BJ (cell line): ENCODE measurements at regions of chr4 and their contacts with region 1.

Region 1: DNA sequence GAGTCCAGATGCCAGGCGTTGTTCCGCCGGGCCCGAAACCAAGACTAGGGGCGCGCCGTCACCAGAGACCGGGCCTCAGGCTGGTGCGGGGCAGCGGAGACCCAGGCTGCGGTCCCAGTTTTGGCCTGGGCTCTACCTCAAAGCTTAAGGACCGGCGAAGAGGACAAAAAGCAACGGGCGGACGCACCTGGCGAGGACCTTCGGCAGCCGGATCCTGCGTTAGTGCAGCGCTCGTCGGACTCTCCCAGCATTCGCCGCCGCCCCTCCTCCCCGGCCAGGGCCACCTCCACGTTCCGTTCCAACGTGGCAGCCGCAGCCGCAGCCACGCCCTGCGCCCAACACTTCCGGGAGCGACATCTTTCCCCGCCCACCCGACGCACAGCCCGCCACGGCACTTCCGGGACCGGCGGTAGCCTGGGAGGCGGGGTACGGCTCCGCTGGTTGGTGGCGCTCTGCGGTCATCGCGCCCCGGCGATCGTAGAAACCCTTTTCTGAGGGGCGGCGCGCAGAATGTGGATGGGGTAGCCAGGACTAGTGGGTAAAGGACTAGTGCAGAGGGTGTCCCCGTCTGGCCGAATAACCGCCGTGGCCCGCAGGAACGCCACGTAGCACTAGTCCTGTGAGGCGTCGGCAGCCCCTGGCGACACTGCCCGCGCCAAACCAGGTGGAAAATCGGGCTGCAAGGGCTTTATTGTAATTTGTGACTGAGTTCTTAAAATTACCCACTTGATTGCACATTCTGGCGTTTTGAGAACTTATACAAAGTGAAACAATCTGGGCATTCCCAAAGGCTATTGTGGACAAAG is at the start of gene SEC31A:
- DNase-seq: peak; percentile 39
- H3K4me3 ChIP-seq: peak within 1 kb of the TSS; percentile 97
- H3K27me3 ChIP-seq: no peaks in the 10 kb centered on the region
- CTCF ChIP-seq: 0 out of 2 replicates have a peak, but pooled peaks have one; percentile 14
- polyA plus RNA-seq, gene SEC31A: 404 and 451 TPM in 2 replicates

Region 2: GRCh38 chr4:82423245-82424054 is 467.7 kb before region 1 on chr4:
- CTCF ChIA-PET with region 1: no interaction called
- POLR2A ChIA-PET with region 1: interaction called, 14 read pairs
- DNase-seq: no peak
- H3K4me3 ChIP-seq: no peak overlapping the region
- H3K27me3 ChIP-seq: no peaks in the 10 kb centered on the region
- CTCF ChIP-seq: no peak